ENCODE measurements at regions of chr18 and their contacts with region 1.

Region 1: GRCh38 chr18:11387880-11388279 is 221.5 kb upstream of the SLC35G4 start:
- DNase-seq: peak; percentile 57 to 73
- ATAC-seq: peak in 7 of 8 donors; percentile 47 to 86 (median 76)
- H3K4me3 ChIP-seq: no peak overlapping the region
- H3K27ac ChIP-seq: no peak overlapping the region
- H3K4me1 ChIP-seq: no peaks in the 10 kb centered on the region
- H3K27me3 ChIP-seq: no peaks in the 10 kb centered on the region
- CTCF ChIP-seq: peak; percentile 27 to 67 (median 56)

Region 2: DNA sequence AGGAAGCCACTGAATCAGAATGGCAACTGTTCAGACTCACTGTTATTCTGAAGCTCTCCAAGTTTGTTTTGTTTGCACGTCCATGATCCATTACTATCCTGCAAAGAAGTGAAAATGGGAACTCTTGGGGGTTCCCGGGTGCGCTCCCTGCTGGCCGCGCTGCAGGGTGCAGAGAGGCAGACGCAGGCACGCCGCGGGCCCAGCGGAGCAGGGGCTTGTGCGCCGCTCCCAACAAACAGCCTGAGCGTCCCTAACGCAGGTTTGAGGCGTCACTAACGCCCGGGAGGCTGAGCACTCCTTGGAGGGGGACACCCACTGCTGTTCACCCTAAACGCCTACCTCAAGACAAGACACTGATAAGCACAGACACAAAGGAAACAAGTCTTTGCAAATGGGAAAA is 224.2 kb before region 1 on chr18:
- intact Hi-C with region 1: loop called in 1 of 10 experiments (anchors 10 kb)
- DNase-seq: peak in 1 of 2 donors; percentile 32
- ATAC-seq: peak in 4 of 8 donors; percentile 53 to 69 (median 55)
- H3K4me3 ChIP-seq: no peak overlapping the region
- H3K27ac ChIP-seq: no peak overlapping the region
- H3K4me1 ChIP-seq: no peaks in the 10 kb centered on the region
- H3K27me3 ChIP-seq: peaks cover 0 to 40% (median 10%) of the 10 kb centered on the region in 7 donors
- CTCF ChIP-seq: peak in 7 of 9 donors; percentile 42 to 66 (median 52)

Region 3: DNA sequence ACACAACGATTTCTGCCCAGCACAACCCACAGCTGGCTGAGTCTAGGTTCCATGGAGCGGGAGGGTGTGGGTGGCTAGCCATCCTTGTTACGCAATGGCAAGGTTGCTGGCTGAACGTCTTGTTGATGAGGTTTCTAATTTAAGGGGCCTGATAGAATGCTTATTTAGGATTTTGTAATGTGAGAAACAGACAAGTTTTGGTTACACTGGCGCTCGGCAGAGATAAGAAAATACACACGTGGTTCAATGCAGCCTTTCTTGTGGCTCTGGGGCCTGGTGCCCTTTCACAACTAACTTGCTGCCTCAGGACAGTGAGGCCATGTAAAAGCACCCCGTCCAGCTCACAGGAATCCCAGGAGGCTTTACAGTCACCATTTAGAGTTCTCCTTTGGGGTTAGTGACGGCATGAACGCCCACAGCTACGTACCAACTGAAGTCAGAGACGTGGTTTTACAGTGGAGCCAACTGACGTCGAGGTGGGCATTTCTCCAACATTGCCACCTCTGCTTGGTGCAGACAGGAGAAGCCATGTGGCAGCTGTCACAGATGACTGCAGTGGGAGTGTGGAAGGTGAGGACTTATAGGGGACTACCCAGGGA is 208.8 kb before region 1 on chr18:
- intact Hi-C with region 1: loop called in 1 of 10 experiments (anchors 10 kb)
- DNase-seq: peak; percentile 20 to 42
- ATAC-seq: peak; percentile 51 to 88 (median 66)
- H3K4me3 ChIP-seq: no peak overlapping the region
- H3K27ac ChIP-seq: peak overlapping the region in 1 of 10 donors; percentile 35
- H3K4me1 ChIP-seq: peaks cover 0 to 9% (median 0%) of the 10 kb centered on the region in 9 donors
- H3K27me3 ChIP-seq: no peaks in the 10 kb centered on the region
- CTCF ChIP-seq: no peak

Region 4: GRCh38 chr18:11304928-11305327 is 83.0 kb before region 1 on chr18:
- intact Hi-C with region 1: loop called (anchors 2 to 10 kb)
- DNase-seq: no peak
- ATAC-seq: no peak
- H3K4me3 ChIP-seq: no peak overlapping the region
- H3K27ac ChIP-seq: no peak overlapping the region
- H3K4me1 ChIP-seq: peaks cover 0 to 5% (median 0%) of the 10 kb centered on the region in 9 donors
- H3K27me3 ChIP-seq: no peaks in the 10 kb centered on the region
- CTCF ChIP-seq: no peak

Region 5: GRCh38 chr18:11310476-11311086 is 77.3 kb before region 1 on chr18:
- intact Hi-C with region 1: loop called in 9 of 10 experiments (anchors 2 to 10 kb)
- DNase-seq: peak; percentile 26 to 31
- ATAC-seq: peak in 5 of 8 donors; percentile 47 to 70 (median 61)
- H3K4me3 ChIP-seq: no peak overlapping the region
- H3K27ac ChIP-seq: no peak overlapping the region
- H3K4me1 ChIP-seq: peaks cover 0 to 8% (median 0%) of the 10 kb centered on the region in 9 donors
- H3K27me3 ChIP-seq: no peaks in the 10 kb centered on the region
- CTCF ChIP-seq: peak in 8 of 9 donors; percentile 31 to 72 (median 66)

Region 6: GRCh38 chr18:11339188-11339775 is 48.6 kb before region 1 on chr18:
- intact Hi-C with region 1: loop called in 1 of 10 experiments (anchors 10 kb)
- DNase-seq: no peak
- ATAC-seq: no peak
- H3K4me3 ChIP-seq: no peak overlapping the region
- H3K27ac ChIP-seq: no peak overlapping the region
- H3K4me1 ChIP-seq: no peaks in the 10 kb centered on the region
- H3K27me3 ChIP-seq: no peaks in the 10 kb centered on the region
- CTCF ChIP-seq: no peak

Region 7: DNA sequence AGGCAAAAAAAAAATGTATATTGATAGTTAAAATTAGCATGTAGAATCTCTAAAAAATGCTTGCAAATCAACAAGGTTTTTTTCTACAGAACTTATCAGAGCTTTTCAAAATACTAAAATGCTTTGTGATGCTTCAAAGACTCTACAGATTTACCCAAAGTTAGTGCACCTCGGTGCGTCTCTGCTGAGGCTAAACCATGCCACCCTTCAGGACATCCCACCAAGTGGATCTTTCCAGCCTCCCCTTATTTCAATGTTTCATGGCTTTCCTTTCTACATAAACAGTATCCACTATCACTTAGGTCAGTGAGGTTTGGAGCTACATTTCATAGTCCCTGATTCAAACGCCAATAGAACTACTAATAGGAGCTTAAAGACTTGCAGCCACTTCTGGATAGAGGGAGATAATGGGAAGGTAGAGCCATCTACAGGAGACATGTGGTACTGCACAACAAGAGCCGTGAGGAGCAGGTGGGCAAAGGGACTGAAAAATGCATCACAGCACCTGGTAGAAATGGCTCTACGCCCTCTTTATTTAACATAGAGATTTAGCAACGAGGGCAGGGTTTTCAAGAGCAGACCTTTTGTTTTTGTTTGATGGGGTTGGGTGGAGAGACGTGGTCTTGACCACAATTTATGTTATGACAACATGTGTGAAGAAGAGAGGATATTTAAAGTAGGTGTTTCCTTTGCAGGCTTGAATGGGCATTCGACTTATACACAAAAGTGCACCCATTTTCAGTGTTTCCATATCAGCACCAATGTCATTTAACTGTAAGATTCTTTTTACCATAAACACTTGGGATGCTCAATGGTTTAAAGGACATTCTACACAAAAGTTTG is 165.4 kb after region 1 on chr18:
- intact Hi-C with region 1: no loop called
- DNase-seq: no peak
- ATAC-seq: peak in 5 of 8 donors; percentile 23 to 75 (median 58)
- H3K4me3 ChIP-seq: no peak overlapping the region
- H3K27ac ChIP-seq: no peak overlapping the region
- H3K4me1 ChIP-seq: no peaks in the 10 kb centered on the region
- H3K27me3 ChIP-seq: peaks cover 0 to 17% (median 0%) of the 10 kb centered on the region in 7 donors
- CTCF ChIP-seq: peak; percentile 71 to 95 (median 89)

Region 8: GRCh38 chr18:11570769-11571168 is 182.9 kb after region 1 on chr18:
- intact Hi-C with region 1: no loop called
- DNase-seq: no peak
- ATAC-seq: no peak
- H3K4me3 ChIP-seq: no peak overlapping the region
- H3K27ac ChIP-seq: no peak overlapping the region
- H3K4me1 ChIP-seq: no peaks in the 10 kb centered on the region
- H3K27me3 ChIP-seq: peaks cover 0 to 20% (median 12%) of the 10 kb centered on the region in 7 donors
- CTCF ChIP-seq: peak in 1 of 9 donors; percentile 19